ENCODE measurements at regions of chr7 and their contacts with region 1.

Region 1: DNA sequence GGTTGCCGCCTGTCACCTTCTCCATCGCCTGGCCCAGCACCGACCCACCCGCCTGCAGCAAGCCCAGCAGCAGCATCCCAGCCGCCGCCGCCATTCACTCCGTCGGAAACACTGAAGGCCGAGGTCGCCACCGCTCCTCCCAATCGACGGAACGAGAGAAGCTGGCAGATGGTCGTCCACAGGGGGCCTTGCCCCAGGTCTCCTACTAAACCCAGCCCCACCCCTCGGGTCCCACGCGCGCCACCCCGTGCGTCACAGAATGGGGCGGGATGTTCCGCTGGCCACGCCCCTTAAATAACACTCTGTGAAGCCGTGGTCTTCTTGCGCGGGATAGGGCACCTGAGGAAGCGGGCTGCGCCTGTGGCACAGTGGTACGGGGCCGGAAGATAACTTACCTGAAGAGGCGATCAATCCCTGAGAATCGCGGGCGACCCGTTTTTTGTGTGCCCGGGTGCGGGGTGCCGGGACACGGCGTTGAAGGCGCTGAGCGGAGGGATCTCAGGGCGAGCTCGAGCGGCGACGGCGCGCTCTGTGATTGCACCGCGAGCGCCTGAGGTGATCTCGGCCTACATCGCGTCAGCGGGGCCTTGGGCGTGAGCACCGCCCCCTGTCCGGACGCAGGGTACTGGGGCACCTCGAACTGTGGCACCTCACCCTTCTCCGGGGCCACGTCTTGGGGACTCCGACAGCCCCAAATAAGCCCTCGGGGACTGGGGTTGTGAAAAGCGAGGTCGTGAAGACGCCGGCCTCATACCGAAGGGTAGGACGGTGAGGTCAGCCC is at the start of gene CYP51A1:
- DNase-seq: peak; percentile 93
- H3K4me3 ChIP-seq: peak within 1 kb of the TSS; percentile 73 to 94 (median 81)
- H3K27ac ChIP-seq: peak within 1 kb of the TSS; percentile 95
- H3K4me1 ChIP-seq: peaks cover 22% of the 10 kb centered on the region
- H3K27me3 ChIP-seq: no peaks in the 10 kb centered on the region
- CTCF ChIP-seq: peak in 1 of 2 donors; percentile 11
- total RNA-seq, gene CYP51A1: 213 to 238 TPM

Region 2: DNA sequence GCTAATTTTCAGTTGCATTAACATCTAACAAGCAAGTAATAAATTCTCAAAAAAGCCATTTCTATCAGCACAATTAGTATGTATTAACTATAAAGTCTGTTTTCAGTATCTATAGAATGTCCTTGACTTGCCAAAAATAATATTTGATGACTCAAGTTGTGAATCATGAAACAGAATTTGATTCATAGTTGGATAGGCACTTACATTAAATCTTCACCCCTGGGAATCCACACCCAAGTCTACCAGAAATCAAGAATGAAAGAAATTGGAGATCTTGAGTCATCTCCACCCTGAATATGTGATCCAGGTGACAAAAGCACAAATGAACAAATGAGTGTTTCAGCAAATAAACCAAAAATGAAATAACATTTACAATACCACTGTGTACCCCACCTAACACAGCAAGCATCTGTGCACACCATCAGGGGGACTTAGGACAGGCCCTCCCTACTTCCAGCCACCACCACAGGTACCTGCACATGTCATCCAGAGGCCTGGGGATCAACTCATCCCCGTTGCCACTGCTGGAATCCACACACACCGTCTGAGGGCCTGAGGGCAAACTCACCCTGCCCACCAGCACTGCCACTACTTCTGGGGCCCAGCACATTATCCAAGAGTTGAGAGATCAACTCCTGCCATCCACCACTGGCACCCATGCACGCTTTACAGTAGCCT is 414.1 kb before region 1 on chr7:
- CTCF ChIA-PET with region 1: no interaction called
- dilution Hi-C with region 1: no loop called
- in situ Hi-C with region 1: no loop called
- intact Hi-C with region 1: no loop called
- DNase-seq: peak; percentile 84
- H3K4me3 ChIP-seq: no peak overlapping the region
- H3K27ac ChIP-seq: peak overlapping the region; percentile 50
- H3K4me1 ChIP-seq: peaks cover 18% of the 10 kb centered on the region
- H3K27me3 ChIP-seq: no peaks in the 10 kb centered on the region
- CTCF ChIP-seq: no peak

Region 3: DNA sequence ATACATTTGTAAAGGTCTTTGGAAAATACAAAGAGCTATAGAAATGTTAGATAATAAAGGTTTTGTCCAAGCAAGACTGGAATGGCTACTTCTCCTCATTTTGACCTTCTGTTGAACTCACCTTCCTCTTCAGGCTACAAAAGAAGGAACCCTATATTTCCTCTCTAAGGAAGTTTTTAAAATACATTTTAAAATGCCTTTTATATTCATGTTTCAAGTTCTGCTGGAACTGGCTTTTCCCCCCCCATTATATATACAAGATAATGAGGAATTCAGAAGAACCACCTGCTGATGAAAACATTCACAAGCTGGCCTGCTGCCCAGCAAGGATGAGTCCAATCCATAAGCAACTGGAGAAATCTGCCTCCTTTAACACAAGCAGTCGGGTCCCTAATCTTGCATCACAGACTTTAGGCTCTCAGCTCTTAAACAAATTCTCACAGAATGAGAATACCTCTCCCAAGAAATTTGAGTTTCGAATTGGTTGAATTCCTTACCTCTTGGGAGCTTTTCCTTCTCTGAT is 298.6 kb before region 1 on chr7:
- CTCF ChIA-PET with region 1: no interaction called
- dilution Hi-C with region 1: no loop called
- in situ Hi-C with region 1: no loop called
- intact Hi-C with region 1: no loop called
- DNase-seq: peak; percentile 58
- H3K4me3 ChIP-seq: no peak overlapping the region
- H3K27ac ChIP-seq: no peak overlapping the region
- H3K4me1 ChIP-seq: peaks cover 14% of the 10 kb centered on the region
- H3K27me3 ChIP-seq: no peaks in the 10 kb centered on the region
- CTCF ChIP-seq: no peak

Region 4: GRCh38 chr7:91940572-91941341 is 193.7 kb before region 1 on chr7 and contains the start of gene AKAP9:
- CTCF ChIA-PET with region 1: no interaction called
- dilution Hi-C with region 1: no loop called
- in situ Hi-C with region 1: no loop called
- intact Hi-C with region 1: loop called (anchors 5 kb)
- DNase-seq: peak; percentile 86
- H3K4me3 ChIP-seq: peak within 1 kb of the TSS; percentile 80 to 95 (median 91)
- H3K27ac ChIP-seq: peak within 1 kb of the TSS; percentile 81
- H3K4me1 ChIP-seq: peaks cover 6% of the 10 kb centered on the region
- H3K27me3 ChIP-seq: no peaks in the 10 kb centered on the region
- CTCF ChIP-seq: no peak
- total RNA-seq, gene AKAP9: 34.8 to 42.1 TPM

Region 5: DNA sequence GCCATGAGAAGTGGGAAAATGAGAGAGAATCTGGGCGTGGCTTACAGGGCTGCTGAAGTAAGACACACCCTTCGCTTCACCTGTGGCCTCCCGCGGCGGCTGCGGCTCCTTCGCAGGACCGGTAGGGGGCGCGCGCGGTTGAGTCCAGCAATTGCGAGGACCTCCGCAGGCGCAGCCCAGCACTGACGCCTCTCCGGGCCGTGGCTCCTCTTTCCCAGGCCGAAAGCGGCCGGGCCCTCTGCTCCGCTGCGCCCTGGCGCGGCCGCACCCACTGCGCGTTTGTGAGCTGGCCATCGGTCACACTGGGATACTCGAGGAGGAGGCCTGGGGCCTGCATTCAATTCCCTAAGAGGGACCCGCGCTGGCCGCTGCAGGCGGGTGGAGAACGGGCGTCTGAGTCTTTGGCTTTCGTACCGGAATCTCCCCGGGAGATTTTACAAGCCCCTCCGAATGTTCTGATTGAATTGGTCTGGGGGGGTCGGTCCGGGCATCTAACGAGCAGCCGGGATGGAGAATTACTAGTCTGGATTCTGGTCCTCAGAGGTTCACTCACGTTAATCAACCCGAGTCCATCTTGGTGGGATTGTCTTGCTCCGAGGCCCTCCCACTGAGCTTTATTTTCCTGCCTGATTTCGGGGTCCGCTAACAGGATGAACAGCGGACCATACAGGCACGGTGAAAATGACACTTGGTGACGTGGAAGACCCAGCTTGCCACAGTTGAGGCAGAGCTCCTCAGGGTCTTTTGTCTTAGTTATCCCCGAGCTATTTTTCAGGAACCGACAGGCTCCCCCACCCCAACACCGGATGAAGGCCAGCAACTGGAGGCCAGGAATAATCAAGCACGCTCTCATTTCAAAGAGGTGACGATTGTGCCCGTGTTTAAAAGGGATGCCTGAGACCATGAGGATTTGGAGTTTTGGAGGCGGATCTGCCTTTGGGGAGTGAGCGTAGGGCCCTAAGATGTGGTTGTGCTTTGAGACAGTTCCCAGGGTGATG is 44.8 kb after region 1 on chr7 and contains the start of gene LRRD1:
- CTCF ChIA-PET with region 1: no interaction called
- dilution Hi-C with region 1: no loop called
- in situ Hi-C with region 1: no loop called
- intact Hi-C with region 1: loop called (anchors 2 kb)
- DNase-seq: peak; percentile 82
- H3K4me3 ChIP-seq: peak within 1 kb of the TSS; percentile 31 to 57 (median 44)
- H3K27ac ChIP-seq: no peak within 1 kb of the TSS
- H3K4me1 ChIP-seq: no peaks in the 10 kb centered on the region
- H3K27me3 ChIP-seq: no peaks in the 10 kb centered on the region
- CTCF ChIP-seq: peak; percentile 89 to 93
- total RNA-seq, gene LRRD1: under 0.01 TPM in 1 of 2 donors, not detected in the other

Region 6: DNA sequence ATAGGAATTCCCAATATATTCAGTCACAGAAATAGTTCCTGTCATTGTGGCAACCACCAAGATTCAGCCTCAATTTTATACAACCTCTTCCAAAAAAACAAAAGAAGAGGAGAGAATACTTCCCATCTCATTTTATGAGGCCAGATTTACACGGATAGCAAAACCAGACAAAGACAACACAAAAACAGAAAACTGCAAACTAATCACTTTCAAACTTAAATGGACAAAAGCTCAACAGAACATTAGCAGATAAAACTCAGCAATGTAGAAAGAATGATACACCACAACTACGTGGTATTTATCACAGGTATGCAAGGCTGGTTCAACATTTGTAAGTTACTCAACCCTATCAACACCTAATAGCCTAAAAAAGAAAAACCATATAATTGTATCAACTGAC is 371.9 kb after region 1 on chr7:
- CTCF ChIA-PET with region 1: no interaction called
- dilution Hi-C with region 1: no loop called
- in situ Hi-C with region 1: no loop called
- intact Hi-C with region 1: no loop called
- DNase-seq: no peak
- H3K4me3 ChIP-seq: no peak overlapping the region
- H3K27ac ChIP-seq: no peak overlapping the region
- H3K4me1 ChIP-seq: no peaks in the 10 kb centered on the region
- H3K27me3 ChIP-seq: no peaks in the 10 kb centered on the region
- CTCF ChIP-seq: no peak

Measured in mammary epithelial cell (primary cell).